PC-9 (cell line): ENCODE measurements at regions of chr9 and their contacts with region 1.

Region 1: GRCh38 chr9:96566498-96567207 is 53.0 kb downstream of the CDC14B start:
- DNase-seq: peak; percentile 78 to 91
- H3K4me3 ChIP-seq: peak overlapping the region; percentile 88
- H3K27ac ChIP-seq: peak overlapping the region; percentile 92
- H3K4me1 ChIP-seq: peaks cover 31% of the 10 kb centered on the region
- H3K27me3 ChIP-seq: no peaks in the 10 kb centered on the region
- CTCF ChIP-seq: peak; percentile 61

Region 2: DNA sequence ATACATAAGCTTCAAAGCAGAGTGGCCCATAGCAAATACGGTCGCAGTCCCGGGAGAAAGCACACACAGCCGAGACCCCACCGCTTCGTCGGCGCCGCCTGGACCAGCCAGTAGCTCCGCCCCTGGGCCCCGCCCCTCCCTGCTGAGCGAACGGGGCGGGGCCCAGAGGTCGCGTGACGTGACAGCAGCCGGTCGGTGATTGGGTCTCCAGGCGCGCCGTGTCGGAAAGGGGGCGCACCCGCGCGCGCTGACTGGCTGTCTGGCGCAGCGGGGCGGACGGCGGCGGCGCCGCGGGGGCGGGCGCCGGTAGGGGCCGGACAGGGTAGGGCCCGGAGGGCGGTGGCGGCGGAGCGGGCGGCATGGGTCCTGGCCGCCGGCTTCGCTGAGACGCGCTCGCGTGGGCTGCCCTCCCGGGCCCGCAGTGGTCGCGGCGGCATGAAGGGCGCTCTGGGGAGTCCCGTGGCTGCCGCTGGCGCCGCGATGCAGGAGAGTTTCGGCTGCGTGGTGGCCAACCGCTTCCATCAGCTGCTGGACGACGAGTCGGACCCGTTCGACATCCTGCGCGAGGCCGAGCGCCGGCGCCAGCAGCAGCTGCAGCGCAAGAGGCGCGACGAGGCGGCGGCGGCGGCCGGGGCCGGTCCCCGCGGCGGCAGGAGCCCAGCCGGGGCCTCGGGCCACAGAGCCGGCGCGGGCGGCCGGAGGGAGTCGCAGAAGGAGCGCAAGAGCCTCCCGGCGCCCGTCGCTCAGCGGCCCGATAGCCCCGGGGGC is 116.6 kb before region 1 on chr9 and contains the start of gene HABP4:
- CTCF ChIA-PET with region 1: no interaction called
- POLR2A ChIA-PET with region 1: interaction called, 3 read pairs
- intact Hi-C with region 1: loop called (anchors 5 kb)
- DNase-seq: peak; percentile 74 to 97
- H3K4me3 ChIP-seq: peak within 1 kb of the TSS; percentile 65
- H3K27ac ChIP-seq: no peak within 1 kb of the TSS
- H3K4me1 ChIP-seq: peaks cover 9% of the 10 kb centered on the region
- H3K27me3 ChIP-seq: no peaks in the 10 kb centered on the region
- CTCF ChIP-seq: no peak
- total RNA-seq, gene HABP4: 8.1 and 11.0 TPM in 2 replicates

Region 3: GRCh38 chr9:96500696-96501632 is 65.7 kb before region 1 on chr9:
- CTCF ChIA-PET with region 1: no interaction called
- POLR2A ChIA-PET with region 1: no interaction called
- intact Hi-C with region 1: no loop called
- DNase-seq: no peak
- H3K4me3 ChIP-seq: no peak overlapping the region
- H3K27ac ChIP-seq: no peak overlapping the region
- H3K4me1 ChIP-seq: no peaks in the 10 kb centered on the region; the same call in 1 of the 2 replicates
- H3K27me3 ChIP-seq: no peaks in the 10 kb centered on the region
- CTCF ChIP-seq: no peak

Region 4: DNA sequence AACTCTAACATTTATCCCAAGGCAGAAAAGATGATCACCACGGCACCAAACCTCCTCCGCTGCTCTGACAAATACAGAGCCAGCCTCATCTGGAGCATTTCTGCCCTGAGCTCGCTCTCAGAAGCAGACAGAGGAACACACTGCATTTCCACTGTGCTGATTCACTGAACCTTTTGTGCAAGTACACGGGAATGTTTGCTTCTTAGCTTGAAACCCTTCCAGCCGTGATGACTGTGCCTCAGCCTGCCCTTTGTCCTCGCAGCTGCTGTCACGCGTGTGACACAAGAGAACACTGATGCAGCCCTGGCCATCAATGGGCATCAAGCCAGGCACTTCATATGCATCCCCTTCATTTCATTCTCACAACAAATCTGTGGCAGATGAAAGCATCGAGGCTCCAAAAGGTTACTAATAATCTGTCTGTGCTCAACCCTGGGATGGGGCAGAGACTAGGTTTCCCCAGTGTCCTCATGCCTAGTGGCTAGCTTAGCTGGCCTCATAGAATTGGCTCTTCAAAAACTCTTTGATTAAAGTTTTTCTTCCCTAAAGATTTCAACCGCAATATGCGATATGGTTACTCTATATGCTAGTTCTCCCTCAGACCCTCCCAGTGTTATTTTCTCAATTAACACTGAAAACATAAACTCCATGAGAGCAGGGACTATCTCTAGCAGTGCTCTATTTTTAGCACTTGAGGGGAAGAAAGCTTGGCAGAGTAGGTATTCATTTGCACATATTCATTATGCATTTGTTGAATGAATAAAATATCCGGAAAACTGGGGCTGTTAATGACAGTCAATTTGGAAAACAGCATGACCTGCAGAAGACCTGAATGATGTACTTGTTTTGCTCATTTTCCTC is 45.7 kb after region 1 on chr9:
- CTCF ChIA-PET with region 1: interaction called, 12 read pairs
- POLR2A ChIA-PET with region 1: interaction called, 12 read pairs
- intact Hi-C with region 1: no loop called
- DNase-seq: peak; percentile 49 to 73
- H3K4me3 ChIP-seq: peak overlapping the region; percentile 18; the same call in 1 of the 2 replicates
- H3K27ac ChIP-seq: peak overlapping the region; percentile 32; the same call in 1 of the 2 replicates
- H3K4me1 ChIP-seq: peaks cover 26% of the 10 kb centered on the region
- H3K27me3 ChIP-seq: no peaks in the 10 kb centered on the region
- CTCF ChIP-seq: no peak